Right lobe of liver (tissue), 6 donors: ENCODE measurements at regions of chr18 and their contacts with region 1.

Region 1: GRCh38 chr18:49628881-49629795 is 67.3 kb downstream of the LIPG start:
- DNase-seq: peak; percentile 52 to 89 (median 88)
- ATAC-seq: peak; percentile 38 to 72 (median 66)
- H3K4me3 ChIP-seq: no peak overlapping the region
- H3K27ac ChIP-seq: peak overlapping the region in 2 of 3 donors; percentile 83
- H3K4me1 ChIP-seq: peaks cover 0 to 68% (median 31%) of the 10 kb centered on the region in 4 donors
- H3K27me3 ChIP-seq: no peaks in the 10 kb centered on the region
- CTCF ChIP-seq: peak; percentile 37 to 62 (median 60)
- POLR2A ChIP-seq: no peak

Region 2: GRCh38 chr18:49561289-49562193 is 67.6 kb before region 1 on chr18 and contains the start of gene LIPG:
- intact Hi-C with region 1: loop called in 1 of 2 experiments (anchors 10 kb)
- DNase-seq: peak; percentile 76 to 90 (median 84)
- ATAC-seq: peak; percentile 69 to 80 (median 76)
- H3K4me3 ChIP-seq: peak within 1 kb of the TSS; percentile 50 to 95 (median 86)
- H3K27ac ChIP-seq: peak within 1 kb of the TSS; percentile 64 to 74 (median 67)
- H3K4me1 ChIP-seq: peaks cover 0 to 35% (median 8%) of the 10 kb centered on the region in 4 donors
- H3K27me3 ChIP-seq: no peaks in the 10 kb centered on the region
- CTCF ChIP-seq: peak in 1 of 4 donors; percentile 2
- POLR2A ChIP-seq: peak; percentile 95
- total RNA-seq, gene LIPG: 35.0 to 120 (median 59.1) TPM

Region 3: GRCh38 chr18:49572611-49573345 is 56.4 kb before region 1 on chr18:
- intact Hi-C with region 1: loop called (anchors 10 kb)
- DNase-seq: no peak
- ATAC-seq: peak; percentile 17 to 42 (median 32)
- H3K4me3 ChIP-seq: no peak overlapping the region
- H3K27ac ChIP-seq: no peak overlapping the region
- H3K4me1 ChIP-seq: no peaks in the 10 kb centered on the region
- H3K27me3 ChIP-seq: no peaks in the 10 kb centered on the region
- CTCF ChIP-seq: no peak
- POLR2A ChIP-seq: no peak

Region 4: DNA sequence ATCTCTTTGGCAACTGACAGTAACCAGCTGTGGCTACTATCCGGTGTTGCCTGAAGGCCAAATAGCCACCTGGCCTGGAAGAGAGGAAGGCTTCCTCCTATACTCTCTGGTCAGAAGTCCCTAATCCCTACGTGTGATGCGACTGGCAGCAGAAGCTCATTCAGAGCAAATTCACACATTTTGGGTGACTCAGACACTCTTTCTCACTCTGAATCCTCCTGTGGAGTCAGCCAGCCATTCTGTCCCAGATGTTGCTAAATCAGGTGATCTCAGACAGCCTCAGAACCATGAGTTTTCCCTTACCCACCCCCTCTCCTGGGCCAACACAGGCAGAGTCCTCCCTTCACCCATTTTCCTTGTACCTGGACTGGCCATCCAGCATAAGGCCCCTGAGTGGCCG is 602.5 kb after region 1 on chr18:
- intact Hi-C with region 1: no loop called
- DNase-seq: no peak
- ATAC-seq: no peak
- H3K4me3 ChIP-seq: no peak overlapping the region
- H3K27ac ChIP-seq: no peak overlapping the region
- H3K4me1 ChIP-seq: no peaks in the 10 kb centered on the region
- H3K27me3 ChIP-seq: no peaks in the 10 kb centered on the region
- CTCF ChIP-seq: no peak
- POLR2A ChIP-seq: no peak